ENCODE measurements at regions of chr18 and their contacts with region 1.

Region 1: DNA sequence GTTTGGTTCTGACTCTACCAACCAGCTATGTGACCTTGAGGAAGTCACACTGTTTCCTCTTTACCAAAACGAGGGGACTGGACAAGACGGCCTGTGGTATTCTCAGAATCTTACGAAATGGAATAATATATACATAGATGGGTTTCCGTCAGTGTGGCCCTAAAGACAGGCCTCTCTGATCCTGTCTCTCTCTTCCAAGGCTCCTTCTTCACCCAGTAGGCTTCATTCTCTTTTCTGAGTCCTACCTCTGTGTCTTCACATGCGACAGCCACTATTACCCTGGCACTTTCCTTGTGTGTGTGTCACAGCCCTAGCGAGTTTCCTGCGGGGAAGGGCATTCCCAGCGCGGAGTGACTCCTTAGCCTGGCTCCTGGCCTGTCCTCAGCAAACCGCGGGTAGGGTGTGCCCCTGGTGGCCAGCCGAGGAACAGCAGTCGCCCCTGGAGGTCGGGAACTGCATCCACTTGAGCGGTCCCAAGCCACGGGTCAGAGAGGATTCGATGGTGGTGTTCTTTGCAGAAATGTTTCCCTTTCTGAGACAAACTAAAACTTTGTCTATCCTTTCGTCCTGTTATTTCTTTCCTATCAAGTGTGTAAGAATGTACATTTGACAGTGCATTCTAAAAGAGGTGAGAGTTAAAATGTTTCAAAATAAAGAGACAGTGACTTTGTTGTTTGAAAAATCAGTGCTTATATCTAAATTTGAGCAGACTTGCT is 63.3 kb downstream of the RAB31 start:
- DNase-seq: peak; percentile 73
- H3K4me3 Mint-ChIP-seq: no peak overlapping the region
- H3K27ac Mint-ChIP-seq: no peak overlapping the region
- H3K4me1 Mint-ChIP-seq: peaks cover 2% of the 10 kb centered on the region
- H3K27me3 Mint-ChIP-seq: peaks cover 26% of the 10 kb centered on the region

Region 2: GRCh38 chr18:9661564-9661963 is 109.9 kb before region 1 on chr18:
- CTCF ChIA-PET with region 1: no interaction called
- intact Hi-C with region 1: no loop called
- DNase-seq: no peak
- H3K4me3 Mint-ChIP-seq: no peak overlapping the region
- H3K27ac Mint-ChIP-seq: no peak overlapping the region
- H3K4me1 Mint-ChIP-seq: no peaks in the 10 kb centered on the region
- H3K27me3 Mint-ChIP-seq: no peaks in the 10 kb centered on the region

Region 3: DNA sequence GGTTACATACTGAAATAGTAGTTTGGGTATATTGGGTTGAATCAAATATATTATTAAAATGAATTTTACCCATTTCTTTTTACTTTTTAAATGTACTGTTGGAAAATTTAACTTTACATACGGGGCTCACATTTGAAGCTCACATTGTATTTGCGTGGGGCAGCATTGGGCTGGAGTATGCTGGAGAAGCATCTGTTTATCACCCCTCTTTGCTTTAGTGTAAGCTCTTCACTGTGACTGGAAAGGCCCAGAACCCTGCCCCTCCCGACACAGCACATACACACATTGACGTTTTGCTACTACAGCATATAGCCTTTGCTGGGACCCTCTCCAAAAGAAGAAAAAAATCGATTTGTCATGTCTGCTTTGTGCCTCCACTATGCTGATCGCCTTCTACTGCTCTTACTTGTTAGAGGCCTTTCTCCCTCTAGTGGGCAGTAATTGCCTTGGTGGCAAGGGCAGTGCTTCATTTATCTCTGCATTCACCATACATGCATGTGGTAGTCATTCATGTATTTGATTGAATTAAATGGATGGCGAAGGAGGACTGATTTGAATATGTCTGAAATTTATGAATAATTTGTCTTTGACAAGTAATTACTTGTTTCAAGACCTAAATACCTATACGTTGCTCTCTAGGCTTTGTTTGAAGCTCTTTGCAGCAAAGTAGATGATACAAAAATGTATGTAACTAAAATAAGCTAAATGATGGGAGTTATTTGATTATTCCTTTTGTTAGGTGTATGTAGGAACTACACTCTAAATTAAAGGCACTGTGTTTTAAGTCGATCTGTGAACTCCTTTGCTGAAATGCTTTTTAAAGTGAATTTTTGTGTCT is 179.8 kb after region 1 on chr18:
- CTCF ChIA-PET with region 1: no interaction called
- intact Hi-C with region 1: loop called (anchors 10 kb)
- DNase-seq: peak; percentile 34
- H3K4me3 Mint-ChIP-seq: no peak overlapping the region
- H3K27ac Mint-ChIP-seq: peak overlapping the region; percentile 54
- H3K4me1 Mint-ChIP-seq: no peaks in the 10 kb centered on the region
- H3K27me3 Mint-ChIP-seq: no peaks in the 10 kb centered on the region

Region 4: GRCh38 chr18:10100941-10101701 is 329.7 kb after region 1 on chr18:
- CTCF ChIA-PET with region 1: no interaction called
- intact Hi-C with region 1: no loop called
- DNase-seq: no peak
- H3K4me3 Mint-ChIP-seq: no peak overlapping the region
- H3K27ac Mint-ChIP-seq: no peak overlapping the region
- H3K4me1 Mint-ChIP-seq: no peaks in the 10 kb centered on the region
- H3K27me3 Mint-ChIP-seq: no peaks in the 10 kb centered on the region

Measured in activated naive CD4-positive, alpha-beta T cell treated with anti-CD3 and anti-CD28 coated beads for 36 hours (primary cell).